Astrocyte of the cerebellum (primary cell): ENCODE measurements at regions of chr11 and their contacts with region 1.

Region 1: GRCh38 chr11:61724437-61724836 is 28.0 kb upstream of the MYRF start:
- DNase-seq: no peak
- H3K4me3 ChIP-seq: no peak overlapping the region
- CTCF ChIP-seq: no peak

Region 2: GRCh38 chr11:61639816-61640443 is 84.5 kb before region 1 on chr11:
- in situ Hi-C with region 1: loop called (anchors 5 kb)
- DNase-seq: no peak
- H3K4me3 ChIP-seq: no peak overlapping the region
- CTCF ChIP-seq: no peak

Region 3: GRCh38 chr11:61671527-61671926 is 52.9 kb before region 1 on chr11:
- in situ Hi-C with region 1: loop called (anchors 5 kb)
- DNase-seq: no peak
- H3K4me3 ChIP-seq: no peak overlapping the region
- CTCF ChIP-seq: peak; percentile 37